Activated T-helper 2 cell treated with anti-CD3 and anti-CD28 coated beads, Interferon-gamma antibody, Interleukin-2, Interleukin-4, amounts not matched to agents 10 μg/mL and 5 μg/mL and 100 μg/mL, durations not matched to agents 14 hours and 24 hours and 36 hours (primary cell): ENCODE measurements at regions of chr10 and their contacts with region 1.

Region 1: GRCh38 chr10:110241407-110241806 is 34.0 kb downstream of the MXI1 start:
- DNase-seq: no peak
- H3K4me3 Mint-ChIP-seq: no peak overlapping the region
- H3K27ac Mint-ChIP-seq: no peak overlapping the region
- H3K4me1 Mint-ChIP-seq: peaks cover 9% of the 10 kb centered on the region
- H3K27me3 Mint-ChIP-seq: peaks cover 67% of the 10 kb centered on the region

Region 2: GRCh38 chr10:110252151-110252550 is 10.7 kb after region 1 on chr10:
- intact Hi-C with region 1: loop called (anchors 1 kb)
- DNase-seq: no peak
- H3K4me3 Mint-ChIP-seq: no peak overlapping the region
- H3K27ac Mint-ChIP-seq: no peak overlapping the region
- H3K4me1 Mint-ChIP-seq: peaks cover 31% of the 10 kb centered on the region
- H3K27me3 Mint-ChIP-seq: peaks cover 48% of the 10 kb centered on the region

Region 3: GRCh38 chr10:110279407-110279986 is 38.1 kb after region 1 on chr10:
- intact Hi-C with region 1: loop called (anchors 5 kb)
- DNase-seq: peak; percentile 17
- H3K4me3 Mint-ChIP-seq: no peak overlapping the region
- H3K27ac Mint-ChIP-seq: no peak overlapping the region
- H3K4me1 Mint-ChIP-seq: peaks cover 8% of the 10 kb centered on the region
- H3K27me3 Mint-ChIP-seq: peaks cover 31% of the 10 kb centered on the region